AG04450 (cell line): ENCODE measurements at regions of chr6 and their contacts with region 1.

Region 1: GRCh38 chr6:125858427-125859320 is 67.9 kb downstream of the NCOA7 start:
- DNase-seq: peak; percentile 45
- H3K4me3 ChIP-seq: no peak overlapping the region
- H3K27ac ChIP-seq: no peak overlapping the region
- H3K27me3 ChIP-seq: no peaks in the 10 kb centered on the region
- CTCF ChIP-seq: peak; percentile 96

Region 2: DNA sequence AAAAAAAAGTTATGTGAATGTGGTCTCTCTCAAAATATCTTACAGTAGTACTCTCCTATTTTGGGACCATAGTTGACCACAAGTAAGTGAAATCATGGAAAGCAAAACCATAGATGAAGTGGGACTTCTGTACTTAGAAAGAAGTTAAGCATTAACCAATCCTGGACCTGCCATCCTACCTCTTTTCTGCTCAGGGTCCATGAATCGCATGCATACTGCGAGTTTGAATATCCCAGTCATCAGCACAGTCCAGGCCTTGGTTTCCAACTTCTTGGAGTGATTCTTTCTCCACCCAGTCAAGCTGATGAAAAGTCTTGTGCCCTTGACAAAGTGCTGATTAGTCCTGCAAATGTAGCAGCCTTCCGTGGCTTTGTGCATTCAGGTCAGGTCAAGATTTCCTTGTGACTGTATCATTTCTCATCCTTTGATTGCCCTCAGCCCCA is 850.4 kb before region 1 on chr6:
- CTCF ChIA-PET with region 1: no interaction called
- POLR2A ChIA-PET with region 1: no interaction called
- DNase-seq: no peak
- H3K4me3 ChIP-seq: no peak overlapping the region
- H3K27ac ChIP-seq: no peak overlapping the region
- H3K27me3 ChIP-seq: no peaks in the 10 kb centered on the region
- CTCF ChIP-seq: no peak

Region 3: GRCh38 chr6:125844989-125845388 is 13.7 kb before region 1 on chr6:
- CTCF ChIA-PET with region 1: interaction called, 22 read pairs
- POLR2A ChIA-PET with region 1: no interaction called
- DNase-seq: no peak
- H3K4me3 ChIP-seq: no peak overlapping the region
- H3K27ac ChIP-seq: no peak overlapping the region
- H3K27me3 ChIP-seq: no peaks in the 10 kb centered on the region
- CTCF ChIP-seq: no peak

Region 4: DNA sequence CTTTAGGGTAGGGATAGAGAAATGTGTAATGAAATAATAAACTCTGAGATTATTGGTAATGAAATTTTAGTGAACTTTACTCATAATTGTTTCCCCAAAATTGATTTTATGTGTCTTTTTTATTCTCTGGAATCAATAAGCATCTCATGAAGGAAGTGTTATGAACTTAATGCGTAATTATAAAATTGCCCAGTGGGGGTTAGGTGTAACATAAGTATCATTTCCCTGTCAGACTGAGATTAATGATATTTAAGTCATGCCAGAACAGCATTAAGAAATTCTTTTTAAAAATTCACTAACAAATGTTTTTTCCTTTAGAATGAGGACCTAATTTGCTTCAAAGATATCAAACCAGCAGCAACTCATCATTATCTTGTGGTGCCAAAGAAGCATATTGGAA is 107.9 kb after region 1 on chr6:
- CTCF ChIA-PET with region 1: interaction called, 11 read pairs
- POLR2A ChIA-PET with region 1: no interaction called
- DNase-seq: no peak
- H3K4me3 ChIP-seq: no peak overlapping the region
- H3K27ac ChIP-seq: no peak overlapping the region
- H3K27me3 ChIP-seq: no peaks in the 10 kb centered on the region
- CTCF ChIP-seq: no peak

Region 5: DNA sequence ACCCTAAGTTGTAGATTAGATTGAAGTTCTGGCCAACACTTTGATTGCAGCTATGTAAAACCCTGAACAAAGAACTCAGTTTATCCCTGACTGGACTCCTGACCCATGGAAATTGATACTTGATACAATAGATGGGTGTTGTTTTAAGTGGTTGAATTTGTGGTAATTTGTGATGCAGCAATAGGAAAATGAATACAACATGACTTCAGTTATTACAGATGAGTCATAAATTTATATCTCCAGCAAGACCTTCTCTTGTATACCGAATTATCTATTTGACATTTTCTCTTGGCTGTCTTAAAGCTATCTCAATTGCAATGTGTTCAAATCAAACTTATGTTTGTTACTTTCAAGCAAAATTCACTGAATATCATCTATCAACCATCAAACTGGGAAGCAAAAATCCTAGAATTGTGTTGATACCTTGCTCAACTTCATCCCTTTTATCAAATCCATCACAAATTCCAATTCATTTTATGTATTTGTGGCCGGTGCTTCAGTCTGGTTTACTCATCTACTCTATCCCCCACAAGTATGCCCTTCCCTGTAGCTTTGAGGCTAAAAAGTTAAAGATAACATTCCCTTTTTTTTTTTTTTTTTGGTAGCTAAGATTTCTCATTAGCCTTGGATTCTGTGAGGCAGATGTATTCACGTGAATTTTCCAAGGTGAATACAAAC is 351.9 kb after region 1 on chr6:
- CTCF ChIA-PET with region 1: no interaction called
- POLR2A ChIA-PET with region 1: no interaction called
- DNase-seq: no peak
- H3K4me3 ChIP-seq: no peak overlapping the region
- H3K27ac ChIP-seq: no peak overlapping the region
- H3K27me3 ChIP-seq: no peaks in the 10 kb centered on the region
- CTCF ChIP-seq: no peak